Dorsolateral prefrontal cortex (tissue), 120 donors: ENCODE measurements at regions of chr15 and their contacts with region 1.

Region 1: GRCh38 chr15:72272213-72273002 is at the start of gene PARP6:
- DNase-seq: peak; percentile 95 to 98 (median 97)
- H3K4me3 ChIP-seq: peak within 1 kb of the TSS; percentile 66 to 99 (median 93)
- H3K27ac ChIP-seq: peak within 1 kb of the TSS; percentile 18 to 96 (median 87)
- H3K27me3 ChIP-seq: no peaks in the 10 kb centered on the region
- CTCF ChIP-seq: peak; percentile 71 to 98 (median 89)
- total RNA-seq, gene PARP6: 89.7 to 152 (median 117) TPM

Region 2: GRCh38 chr15:72199711-72200212 is 72.6 kb before region 1 on chr15:
- intact Hi-C with region 1: loop called in 1 of 2 experiments (anchors 2 kb)
- DNase-seq: peak; percentile 63 to 84 (median 80)
- H3K4me3 ChIP-seq: no peak overlapping the region
- H3K27ac ChIP-seq: peak overlapping the region in 41 of 59 donors; percentile 1 to 93 (median 51)
- H3K27me3 ChIP-seq: peaks cover 0 to 7% (median 0%) of the 10 kb centered on the region in 45 donors
- CTCF ChIP-seq: peak; percentile 79 to 95 (median 91)

Region 3: DNA sequence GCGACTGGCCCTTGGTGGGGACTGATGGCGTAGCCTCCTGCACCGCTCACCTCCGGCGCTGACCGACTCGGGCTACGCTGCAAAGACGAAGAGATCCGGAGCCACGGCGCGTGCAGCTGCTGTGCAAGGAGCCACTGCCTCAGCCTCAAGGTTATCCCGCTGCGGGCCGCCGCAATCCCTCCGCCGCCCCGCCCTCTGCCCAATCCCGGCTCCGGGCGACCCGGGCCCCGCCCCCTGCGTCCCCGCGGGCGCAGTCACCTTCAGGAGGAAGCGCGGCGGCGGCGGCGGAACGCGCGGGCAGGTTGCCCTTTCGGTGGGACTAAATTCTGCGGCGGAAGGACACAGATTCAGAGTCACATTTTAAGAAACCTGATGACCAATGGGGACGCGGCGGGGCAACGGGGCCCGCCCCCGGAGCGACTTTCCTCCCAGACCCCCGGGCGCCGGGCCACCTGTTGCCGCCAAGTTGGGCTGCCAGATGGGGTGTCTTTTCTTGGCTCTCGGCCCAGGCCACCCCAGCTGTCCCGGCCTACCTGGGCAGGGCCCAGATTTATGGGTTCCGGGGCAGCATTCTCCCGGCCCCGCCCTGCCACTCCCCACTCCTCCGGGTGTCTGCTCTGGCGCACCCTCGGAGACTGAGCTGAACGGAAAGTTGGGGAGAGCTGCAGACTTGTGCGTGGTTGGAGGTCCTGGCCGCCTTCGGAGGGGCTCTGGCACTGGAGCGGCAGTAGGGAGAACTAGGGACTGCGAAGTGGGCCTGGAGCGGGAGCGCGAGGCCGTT is 41.2 kb before region 1 on chr15 and contains the start of gene PKM:
- intact Hi-C with region 1: loop called (anchors 1 kb)
- DNase-seq: peak; percentile 73 to 95 (median 90)
- H3K4me3 ChIP-seq: peak within 1 kb of the TSS; percentile 52 to 99 (median 93)
- H3K27ac ChIP-seq: peak within 1 kb of the TSS; percentile 80 to 100 (median 98)
- H3K27me3 ChIP-seq: no peaks in the 10 kb centered on the region
- CTCF ChIP-seq: peak in 12 of 56 donors; percentile 3 to 31 (median 8)
- total RNA-seq, gene PKM: 496 to 1,260 (median 977) TPM

Region 4: DNA sequence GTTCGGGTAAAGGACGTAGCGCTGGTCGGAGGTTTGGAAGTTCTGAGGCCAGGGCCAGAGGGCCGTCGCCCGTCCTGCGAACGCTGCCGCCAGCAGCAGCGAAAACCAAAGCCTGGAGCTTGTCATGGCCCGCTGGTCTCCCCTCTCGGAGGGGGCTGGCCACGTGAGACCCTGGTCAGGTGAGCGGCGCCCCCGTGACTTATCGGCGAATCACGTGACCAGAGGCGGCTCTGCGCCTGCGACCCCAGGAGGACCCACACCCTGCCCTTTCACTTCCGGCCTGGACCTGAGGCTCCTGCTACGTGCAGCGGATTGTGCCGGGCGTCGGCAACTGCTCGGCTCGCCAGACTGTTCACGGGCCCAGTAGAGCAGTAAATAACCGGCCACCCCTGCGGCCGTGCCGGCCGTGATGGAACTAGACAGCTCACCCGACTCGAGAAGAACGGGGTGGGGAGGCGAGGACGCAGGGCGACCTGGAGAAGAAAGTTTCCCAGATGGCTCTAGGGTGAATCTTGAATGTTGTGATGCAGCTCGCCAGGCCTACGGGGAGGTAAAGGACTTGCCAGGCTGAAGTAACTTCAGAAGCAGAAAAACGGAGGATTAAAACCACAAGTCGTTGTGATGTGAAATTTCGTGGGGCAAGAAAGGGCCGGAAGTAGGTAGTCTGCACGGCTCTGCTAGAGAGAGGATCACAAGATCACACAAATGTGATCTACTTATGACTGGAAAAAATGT is 103.6 kb after region 1 on chr15 and contains the start of gene HEXA:
- intact Hi-C with region 1: loop called in 1 of 2 experiments (anchors 1 kb)
- DNase-seq: peak; percentile 88 to 96 (median 94)
- H3K4me3 ChIP-seq: peak within 1 kb of the TSS; percentile 69 to 100 (median 96)
- H3K27ac ChIP-seq: peak within 1 kb of the TSS; percentile 49 to 98 (median 90)
- H3K27me3 ChIP-seq: no peaks in the 10 kb centered on the region
- CTCF ChIP-seq: peak in 30 of 56 donors; percentile 6 to 47 (median 30)
- total RNA-seq, gene HEXA: 59.4 to 109 (median 80.2) TPM

Region 5: DNA sequence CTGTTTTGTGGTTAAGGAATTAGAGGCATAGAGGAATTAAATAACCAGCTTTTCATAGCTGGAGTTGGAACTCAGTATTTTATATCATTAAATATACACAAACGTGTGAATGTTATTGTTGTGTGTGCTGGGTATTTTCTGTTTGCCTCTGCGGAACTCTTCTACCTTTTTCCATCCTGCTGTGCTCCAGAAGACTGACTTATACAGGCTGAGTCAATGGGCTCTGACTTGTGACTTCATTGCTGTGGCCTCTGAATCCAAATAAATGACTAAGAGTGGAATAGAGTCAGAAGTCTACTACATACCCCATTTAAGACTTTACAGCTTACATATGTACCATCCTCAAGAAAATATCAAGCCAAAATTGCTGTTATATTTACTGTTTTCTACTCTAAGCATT is 219.4 kb after region 1 on chr15:
- intact Hi-C with region 1: no loop called
- DNase-seq: no peak
- H3K4me3 ChIP-seq: no peak overlapping the region
- H3K27ac ChIP-seq: no peak overlapping the region
- H3K27me3 ChIP-seq: no peaks in the 10 kb centered on the region
- CTCF ChIP-seq: no peak